Sigmoid colon (tissue), 7 donors: ENCODE measurements at regions of chr21 and their contacts with region 1.

Region 1: DNA sequence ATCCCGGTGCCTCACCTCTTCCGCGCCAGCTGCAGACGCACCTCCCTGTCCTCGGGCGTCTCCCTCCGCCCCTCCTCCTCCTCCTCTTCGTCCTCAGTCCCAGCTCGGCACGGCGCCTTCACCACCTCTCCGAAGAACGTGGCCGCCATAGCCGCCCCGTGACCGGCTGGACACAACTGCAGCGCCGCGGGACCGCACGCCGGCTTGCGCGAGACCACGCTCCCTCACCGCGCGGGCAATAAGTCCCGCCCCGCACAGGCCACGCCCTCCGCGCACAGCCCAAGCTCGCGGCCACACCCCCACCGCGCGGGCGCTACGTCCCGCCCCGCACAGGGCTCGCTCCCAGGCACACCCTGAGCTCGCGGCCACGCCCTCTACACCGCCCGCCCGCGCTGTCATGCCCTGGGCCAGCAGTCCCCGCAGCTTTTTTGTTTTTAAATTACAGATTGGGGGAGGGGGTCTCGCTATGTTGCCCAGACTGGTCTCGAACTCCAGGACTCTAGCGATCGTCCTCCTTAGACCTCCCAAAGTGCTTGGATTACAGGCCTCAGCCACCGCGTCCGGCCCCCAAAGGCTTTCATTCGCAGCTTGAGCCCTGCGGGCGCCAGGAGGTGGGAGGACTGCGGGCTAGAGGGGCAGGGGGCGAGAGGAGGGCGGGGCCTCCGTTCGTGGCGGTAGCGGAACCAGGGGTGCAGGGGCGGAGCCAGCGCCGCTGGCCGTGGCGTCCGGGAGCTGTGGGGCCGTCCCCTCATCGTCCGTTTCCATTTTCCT is at the start of gene PSMG1:
- DNase-seq: peak; percentile 96
- H3K4me3 ChIP-seq: peak within 1 kb of the TSS; percentile 72 to 90 (median 82)
- H3K27ac ChIP-seq: peak within 1 kb of the TSS; percentile 87 to 92 (median 90)
- H3K4me1 ChIP-seq: peaks cover 7 to 40% (median 18%) of the 10 kb centered on the region in 4 donors
- H3K27me3 ChIP-seq: no peaks in the 10 kb centered on the region
- CTCF ChIP-seq: no peak
- EP300 ChIP-seq: no peak
- POLR2A ChIP-seq: peak; percentile 60 to 61
- total RNA-seq, gene PSMG1: 12.7 to 28.8 (median 23.7) TPM

Region 2: DNA sequence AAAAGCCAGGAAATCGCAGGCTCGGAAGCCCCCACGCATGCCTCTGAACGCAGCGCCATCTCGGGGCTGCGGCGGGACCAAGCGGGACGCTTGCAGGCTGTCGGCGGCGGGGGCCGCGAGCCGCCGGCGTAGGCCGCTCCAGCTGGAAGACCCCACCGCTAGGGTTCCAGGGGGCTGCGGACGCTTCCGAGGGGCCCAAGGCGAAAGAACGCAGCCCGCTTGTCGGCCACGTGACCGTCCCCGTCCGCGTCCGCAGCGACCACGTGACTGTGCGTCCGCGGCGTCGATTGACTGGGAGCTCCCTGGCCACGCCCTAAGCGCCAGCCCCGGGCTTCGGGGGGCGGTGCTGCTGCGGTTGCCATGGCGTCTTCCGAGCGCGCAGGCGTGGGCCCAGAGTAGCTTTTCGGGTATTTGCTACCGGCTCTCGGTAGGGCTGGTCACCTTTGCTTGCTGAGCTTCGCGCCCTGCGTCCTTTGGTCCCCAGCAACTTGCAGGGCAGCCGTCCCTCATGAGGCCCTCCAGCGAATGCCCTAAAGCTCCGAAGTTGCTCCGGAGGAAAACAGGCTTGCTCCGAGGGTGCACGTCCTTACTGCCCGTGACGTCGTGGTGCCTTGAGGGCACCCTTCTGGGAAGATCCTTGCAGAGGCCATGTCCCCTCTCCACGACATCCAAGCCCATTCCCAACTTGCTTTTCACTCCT is 1619.6 kb before region 1 on chr21:
- intact Hi-C with region 1: loop called (anchors 10 kb)
- DNase-seq: peak; percentile 96
- H3K4me3 ChIP-seq: peak overlapping the region; percentile 63 to 85 (median 74)
- H3K27ac ChIP-seq: peak overlapping the region; percentile 91 to 93 (median 92)
- H3K4me1 ChIP-seq: peaks cover 0 to 26% (median 17%) of the 10 kb centered on the region in 4 donors
- H3K27me3 ChIP-seq: no peaks in the 10 kb centered on the region
- CTCF ChIP-seq: peak in 3 of 4 experiments; percentile 8 to 43 (median 37)
- EP300 ChIP-seq: no peak
- POLR2A ChIP-seq: peak; percentile 18 to 21

Region 3: GRCh38 chr21:38805328-38806152 is 377.9 kb before region 1 on chr21 and contains the start of gene ETS2:
- intact Hi-C with region 1: loop called (anchors 2 kb)
- DNase-seq: peak; percentile 97
- H3K4me3 ChIP-seq: peak within 1 kb of the TSS; percentile 71 to 98 (median 96)
- H3K27ac ChIP-seq: peak within 1 kb of the TSS; percentile 92 to 98 (median 94)
- H3K4me1 ChIP-seq: peaks cover 0 to 39% (median 21%) of the 10 kb centered on the region in 4 donors
- H3K27me3 ChIP-seq: no peaks in the 10 kb centered on the region
- CTCF ChIP-seq: peak in 1 of 4 experiments; percentile 2
- EP300 ChIP-seq: no peak
- POLR2A ChIP-seq: peak; percentile 53 to 58
- total RNA-seq, gene ETS2: 32.1 to 112 (median 41.7) TPM

Region 4: GRCh38 chr21:39313571-39314142 is 130.2 kb after region 1 on chr21 and contains the start of gene BRWD1:
- intact Hi-C with region 1: loop called (anchors 5 kb)
- DNase-seq: peak; percentile 93
- H3K4me3 ChIP-seq: peak within 1 kb of the TSS; percentile 73 to 97 (median 82)
- H3K27ac ChIP-seq: peak within 1 kb of the TSS; percentile 96 to 99 (median 96)
- H3K4me1 ChIP-seq: peaks cover 0 to 35% (median 26%) of the 10 kb centered on the region in 4 donors
- H3K27me3 ChIP-seq: no peaks in the 10 kb centered on the region
- CTCF ChIP-seq: peak in 2 of 4 experiments; percentile 33 to 43
- EP300 ChIP-seq: peak in 1 of 4 donors; percentile 81
- POLR2A ChIP-seq: peak; percentile 57 to 68
- total RNA-seq, gene BRWD1: 53.5 to 92.5 (median 70.4) TPM

Region 5: DNA sequence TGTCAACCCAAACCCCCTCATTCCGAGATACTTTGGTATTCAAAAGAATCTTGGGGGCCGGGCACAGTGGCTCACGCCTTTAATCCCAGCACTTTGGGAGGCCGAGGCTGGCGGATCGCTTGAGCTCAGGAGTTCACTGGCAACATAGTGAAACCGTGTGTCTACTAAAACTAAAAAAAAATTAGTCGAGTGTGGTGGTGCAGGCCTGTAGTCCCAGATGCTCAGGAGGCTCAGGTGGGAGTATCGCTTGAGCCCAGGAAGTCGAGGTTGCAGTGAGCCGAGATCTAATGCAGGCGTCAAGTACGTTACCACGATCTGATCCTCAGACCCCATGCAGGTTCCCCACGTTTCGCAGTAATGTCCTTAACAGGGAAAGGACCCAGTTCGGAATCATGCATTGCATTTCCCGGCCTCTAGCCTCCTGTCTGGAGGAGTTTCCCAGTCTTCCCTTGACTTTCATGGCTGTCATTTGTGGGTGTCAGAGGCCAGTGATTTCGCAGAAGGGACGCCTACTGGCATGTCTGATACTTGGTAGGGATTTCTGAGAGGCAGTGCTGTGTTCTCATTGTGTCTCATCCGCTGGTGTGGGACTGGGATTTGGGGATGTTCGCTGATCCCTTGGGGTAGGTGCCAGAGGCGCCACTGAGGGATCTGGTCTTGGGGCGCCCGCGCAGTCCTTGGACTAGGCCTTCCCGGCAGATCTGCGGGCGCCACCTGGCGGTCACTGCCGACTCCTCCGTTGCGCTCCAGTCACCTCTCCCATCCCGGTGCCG is 204.8 kb after region 1 on chr21:
- intact Hi-C with region 1: loop called (anchors 2 kb)
- DNase-seq: peak; percentile 94
- H3K4me3 ChIP-seq: peak overlapping the region; percentile 16 to 51 (median 44)
- H3K27ac ChIP-seq: peak overlapping the region; percentile 72 to 84 (median 80)
- H3K4me1 ChIP-seq: peaks cover 0 to 42% (median 26%) of the 10 kb centered on the region in 4 donors
- H3K27me3 ChIP-seq: no peaks in the 10 kb centered on the region
- CTCF ChIP-seq: peak; percentile 74 to 97 (median 90)
- EP300 ChIP-seq: no peak
- POLR2A ChIP-seq: no peak

Region 6: GRCh38 chr21:39445321-39446269 is 262.2 kb after region 1 on chr21 and contains the start of gene LCA5L:
- intact Hi-C with region 1: loop called (anchors 2 kb)
- DNase-seq: peak; percentile 95
- H3K4me3 ChIP-seq: peak within 1 kb of the TSS; percentile 48 to 91 (median 76)
- H3K27ac ChIP-seq: peak within 1 kb of the TSS; percentile 91 to 95 (median 92)
- H3K4me1 ChIP-seq: peaks cover 0 to 16% (median 13%) of the 10 kb centered on the region in 4 donors
- H3K27me3 ChIP-seq: no peaks in the 10 kb centered on the region
- CTCF ChIP-seq: no peak
- EP300 ChIP-seq: no peak
- POLR2A ChIP-seq: peak; percentile 40 to 79
- total RNA-seq, gene LCA5L: 0.82 to 5.5 (median 2.1) TPM